AG04449 (cell line): ENCODE measurements at regions of chr2 and their contacts with region 1.

Region 1: GRCh38 chr2:235595422-235596010 is 101.7 kb downstream of the AGAP1 start:
- DNase-seq: no peak
- H3K4me3 ChIP-seq: no peak overlapping the region
- CTCF ChIP-seq: peak; percentile 87

Region 2: DNA sequence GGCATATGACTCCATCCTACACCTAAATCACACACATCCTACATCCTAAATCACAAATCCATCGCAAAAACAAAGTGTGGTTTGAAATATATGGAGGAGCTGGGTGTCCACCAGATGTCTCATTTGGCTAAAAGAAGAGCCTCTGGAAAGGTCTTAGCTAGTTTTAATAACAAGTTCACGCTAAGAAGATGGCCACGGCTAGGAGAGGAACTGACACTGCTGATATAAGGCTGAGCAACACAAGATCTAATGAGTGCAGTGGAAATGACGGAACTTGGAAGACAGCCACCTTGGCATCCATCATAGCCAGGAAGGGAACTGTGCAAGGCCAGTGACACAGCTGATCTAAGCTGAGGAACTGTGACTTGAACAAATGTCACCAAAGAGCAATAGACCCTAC is 161.7 kb before region 1 on chr2:
- CTCF ChIA-PET with region 1: interaction called, 19 read pairs
- POLR2A ChIA-PET with region 1: no interaction called
- DNase-seq: no peak
- H3K4me3 ChIP-seq: no peak overlapping the region
- CTCF ChIP-seq: no peak

Region 3: DNA sequence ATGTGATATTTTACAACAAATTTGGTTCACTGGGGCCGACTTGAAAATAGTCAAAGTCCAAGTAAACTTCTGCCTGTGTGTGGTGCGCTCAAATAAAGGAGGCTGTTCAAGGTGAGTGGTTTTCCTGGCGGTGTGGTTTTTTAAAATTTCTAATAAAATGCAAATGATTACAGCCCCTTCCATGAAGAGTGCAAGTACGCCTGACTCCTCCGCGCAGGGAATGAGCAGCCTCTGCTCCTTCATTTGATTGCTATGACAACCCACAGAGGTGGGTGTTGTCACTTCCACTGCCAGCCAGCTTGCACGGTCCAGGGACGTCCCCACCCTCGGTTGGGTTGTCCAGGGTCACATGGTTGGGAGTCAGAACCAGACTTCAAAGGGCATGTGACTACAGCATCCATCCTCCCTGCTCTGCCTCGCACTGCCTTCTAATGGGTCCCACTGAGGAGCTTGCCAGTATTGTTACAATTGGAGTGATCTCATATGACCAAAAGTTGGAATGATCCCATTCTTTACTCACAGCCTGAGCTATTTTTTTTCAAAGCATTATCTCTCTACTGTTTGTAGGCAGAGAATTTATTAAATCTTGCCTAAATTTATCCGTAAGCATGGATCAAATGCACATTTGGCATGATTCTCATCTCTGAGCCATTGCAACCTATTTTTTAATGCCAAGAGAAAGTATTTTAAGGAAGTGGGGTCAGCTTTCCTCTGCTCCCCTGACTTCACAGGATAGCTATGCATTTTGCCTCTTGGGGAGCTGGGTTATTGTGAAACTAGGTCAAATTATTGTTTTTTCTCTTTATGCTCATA is 19.6 kb after region 1 on chr2:
- CTCF ChIA-PET with region 1: interaction called, 65 read pairs
- POLR2A ChIA-PET with region 1: no interaction called
- DNase-seq: peak; percentile 73
- H3K4me3 ChIP-seq: no peak overlapping the region
- CTCF ChIP-seq: no peak

Region 4: DNA sequence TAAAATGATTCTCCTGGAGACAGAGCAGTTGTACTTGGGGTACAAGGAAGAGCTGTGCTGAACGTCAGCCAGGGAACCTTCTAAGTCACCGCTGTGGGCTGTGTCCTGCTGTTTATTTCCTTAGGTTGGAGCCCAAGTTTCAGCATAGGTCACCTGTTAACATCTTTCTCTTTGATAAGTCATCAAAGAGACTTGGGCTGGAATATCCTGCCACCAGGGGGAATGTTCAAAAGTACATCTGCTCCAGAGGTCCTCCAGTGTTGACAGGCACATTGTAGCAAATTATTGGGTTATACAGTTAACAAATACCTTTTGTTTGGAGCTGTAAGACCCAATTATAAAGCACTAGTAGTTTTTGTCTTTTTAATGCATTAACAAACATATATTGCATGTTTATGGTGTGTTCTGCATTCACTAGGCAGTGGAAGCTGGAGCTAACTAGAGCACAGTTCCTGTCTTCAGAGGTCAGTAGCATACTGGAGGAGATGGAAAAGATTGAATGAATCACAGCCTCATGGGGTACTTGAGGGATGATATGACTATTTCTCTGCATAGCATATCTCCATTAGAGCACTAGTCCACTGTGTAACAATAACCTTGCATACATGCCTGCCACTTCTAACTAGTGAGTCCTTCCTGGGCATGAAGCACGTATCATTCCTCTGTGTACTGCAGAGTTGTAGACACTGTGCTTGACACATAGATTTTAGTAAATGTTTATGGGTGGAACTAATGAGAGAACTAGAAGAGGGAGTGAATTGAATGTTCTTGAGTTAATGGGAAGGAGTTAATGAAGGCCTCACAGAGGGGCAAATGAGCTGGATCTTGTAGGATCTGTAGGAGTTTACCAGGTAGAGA is 80.4 kb after region 1 on chr2:
- CTCF ChIA-PET with region 1: interaction called, 106 read pairs
- POLR2A ChIA-PET with region 1: no interaction called
- DNase-seq: no peak
- H3K4me3 ChIP-seq: no peak overlapping the region
- CTCF ChIP-seq: no peak

Region 5: GRCh38 chr2:235740821-235741220 is 145.3 kb after region 1 on chr2:
- CTCF ChIA-PET with region 1: interaction called, 484 read pairs
- POLR2A ChIA-PET with region 1: no interaction called
- DNase-seq: no peak
- H3K4me3 ChIP-seq: no peak overlapping the region
- CTCF ChIP-seq: no peak